Natural killer cell (primary cell): ENCODE measurements at regions of chr14 and their contacts with region 1.

Region 1: GRCh38 chr14:74109369-74109768 is 24.6 kb downstream of the LIN52 start:
- DNase-seq: no peak
- ATAC-seq: no peak
- H3K4me3 ChIP-seq: no peak overlapping the region
- H3K4me3 Mint-ChIP-seq: no peak overlapping the region
- H3K27ac ChIP-seq: no peak overlapping the region
- H3K27ac Mint-ChIP-seq: no peak overlapping the region
- H3K4me1 ChIP-seq: no peaks in the 10 kb centered on the region
- H3K4me1 Mint-ChIP-seq: no peaks in the 10 kb centered on the region
- H3K27me3 ChIP-seq: no peaks in the 10 kb centered on the region
- H3K27me3 Mint-ChIP-seq: no peaks in the 10 kb centered on the region
- CTCF ChIP-seq: no peak

Region 2: GRCh38 chr14:74203639-74204038 is 94.3 kb after region 1 on chr14:
- intact Hi-C with region 1: no loop called
- DNase-seq: no peak
- ATAC-seq: no peak
- H3K4me3 ChIP-seq: no peak overlapping the region
- H3K4me3 Mint-ChIP-seq: no peak overlapping the region
- H3K27ac ChIP-seq: no peak overlapping the region
- H3K27ac Mint-ChIP-seq: no peak overlapping the region
- H3K4me1 ChIP-seq: no peaks in the 10 kb centered on the region
- H3K4me1 Mint-ChIP-seq: peaks cover 0 to 2% of the 10 kb centered on the region in 2 donors
- H3K27me3 ChIP-seq: no peaks in the 10 kb centered on the region
- H3K27me3 Mint-ChIP-seq: peaks cover 0 to 1% of the 10 kb centered on the region in 2 donors
- CTCF ChIP-seq: no peak

Region 3: GRCh38 chr14:74257078-74257989 is 148.0 kb after region 1 on chr14:
- intact Hi-C with region 1: loop called (anchors 1 kb)
- DNase-seq: peak; percentile 60 to 84
- ATAC-seq: peak; percentile 92 to 98 (median 97)
- H3K4me3 ChIP-seq: peak overlapping the region; percentile 46
- H3K4me3 Mint-ChIP-seq: peak overlapping the region; percentile 79
- H3K27ac ChIP-seq: no peak overlapping the region
- H3K27ac Mint-ChIP-seq: peak overlapping the region in 1 of 2 donors; percentile 54
- H3K4me1 ChIP-seq: peaks cover 16% of the 10 kb centered on the region
- H3K4me1 Mint-ChIP-seq: peaks cover 0 to 6% of the 10 kb centered on the region in 2 donors
- H3K27me3 ChIP-seq: peaks cover 7% of the 10 kb centered on the region
- H3K27me3 Mint-ChIP-seq: peaks cover 0 to 4% of the 10 kb centered on the region in 2 donors
- CTCF ChIP-seq: peak; percentile 100